Activated T-helper 1 cell treated with anti-CD3 and anti-CD28 coated beads, Interleukin-12 subunit alpha, Interleukin-12 subunit beta, Interleukin-2, Interleukin-4 antibody, amounts not matched to agents 30 ng/mL and 10 ng/mL and 1 ng/mL, durations not matched to agents 14 hours and 24 hours and 36 hours (primary cell): ENCODE measurements at regions of chr5 and their contacts with region 1.

Region 1: DNA sequence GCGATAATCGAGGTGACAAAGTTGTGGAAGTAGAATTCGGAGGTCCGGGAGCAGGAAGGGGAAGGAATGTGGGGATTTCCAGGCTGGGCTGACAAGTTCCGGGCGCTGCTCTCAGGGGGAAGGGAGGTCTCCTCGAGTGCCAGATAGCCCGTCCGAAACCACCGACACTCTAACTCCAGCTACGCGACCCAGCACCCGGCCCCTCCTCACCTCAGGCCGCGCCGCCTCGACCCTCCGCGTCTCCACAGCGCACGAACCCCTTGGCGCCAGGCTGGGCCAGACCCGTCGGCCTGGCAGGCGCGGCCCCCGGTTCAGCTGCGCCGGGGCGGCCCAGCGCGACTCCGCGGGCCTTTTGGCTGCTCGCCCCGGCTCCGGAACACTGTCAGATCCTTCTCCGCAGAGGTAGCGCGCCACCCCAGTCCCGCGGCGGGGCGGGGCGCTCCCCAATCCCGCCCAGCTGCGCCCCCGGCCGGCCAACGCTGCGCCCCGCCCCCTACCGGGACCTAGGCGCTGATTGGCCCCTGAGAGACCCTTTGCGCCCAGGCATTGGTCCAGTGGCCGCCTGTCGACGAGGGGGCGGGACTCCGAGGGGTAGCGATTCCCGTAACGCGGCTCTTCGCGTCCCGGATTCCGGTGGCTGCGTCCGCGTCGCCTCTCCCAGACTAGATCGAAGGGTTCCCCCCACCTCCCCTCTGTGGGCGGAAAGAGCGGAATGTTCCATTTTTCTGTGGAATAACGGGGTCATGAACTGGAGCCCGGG is at the start of gene IL6ST:
- DNase-seq: peak; percentile 95
- H3K4me3 Mint-ChIP-seq: peak within 1 kb of the TSS; percentile 95
- H3K27ac Mint-ChIP-seq: peak within 1 kb of the TSS; percentile 95
- H3K4me1 Mint-ChIP-seq: peaks cover 66% of the 10 kb centered on the region
- H3K27me3 Mint-ChIP-seq: no peaks in the 10 kb centered on the region
- total RNA-seq, gene IL6ST: 85.8 and 86.1 TPM in 2 replicates

Region 2: GRCh38 chr5:54619731-54620547 is 1374.8 kb before region 1 on chr5:
- intact Hi-C with region 1: no loop called
- DNase-seq: no peak
- H3K4me3 Mint-ChIP-seq: no peak overlapping the region
- H3K27ac Mint-ChIP-seq: no peak overlapping the region
- H3K4me1 Mint-ChIP-seq: peaks cover 24% of the 10 kb centered on the region
- H3K27me3 Mint-ChIP-seq: peaks cover 9% of the 10 kb centered on the region

Region 3: DNA sequence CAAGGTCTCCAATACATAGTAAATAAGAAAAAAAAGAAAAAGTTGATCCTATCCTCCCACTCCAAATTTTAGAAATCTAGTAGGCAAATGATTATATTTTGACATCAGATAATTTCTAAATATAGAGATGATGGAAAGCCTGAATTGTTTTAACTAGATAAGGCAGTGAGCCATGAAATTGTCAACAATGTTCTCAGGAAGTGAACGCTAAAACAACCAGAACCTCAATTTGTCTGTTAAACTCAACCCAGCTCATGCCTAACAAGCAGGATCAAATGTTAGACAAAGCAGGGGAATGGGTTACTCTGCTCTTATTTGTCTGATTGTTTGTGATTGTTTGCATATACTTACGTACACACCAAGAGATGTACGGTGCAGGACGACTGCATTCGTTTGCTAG is 1058.6 kb before region 1 on chr5:
- intact Hi-C with region 1: no loop called
- DNase-seq: no peak
- H3K4me3 Mint-ChIP-seq: no peak overlapping the region
- H3K27ac Mint-ChIP-seq: no peak overlapping the region
- H3K4me1 Mint-ChIP-seq: no peaks in the 10 kb centered on the region
- H3K27me3 Mint-ChIP-seq: peaks cover 45% of the 10 kb centered on the region

Region 4: GRCh38 chr5:55913466-55914413 is 81.0 kb before region 1 on chr5:
- intact Hi-C with region 1: no loop called
- DNase-seq: no peak
- H3K4me3 Mint-ChIP-seq: no peak overlapping the region
- H3K27ac Mint-ChIP-seq: no peak overlapping the region
- H3K4me1 Mint-ChIP-seq: peaks cover 23% of the 10 kb centered on the region
- H3K27me3 Mint-ChIP-seq: peaks cover 3% of the 10 kb centered on the region

Region 5: DNA sequence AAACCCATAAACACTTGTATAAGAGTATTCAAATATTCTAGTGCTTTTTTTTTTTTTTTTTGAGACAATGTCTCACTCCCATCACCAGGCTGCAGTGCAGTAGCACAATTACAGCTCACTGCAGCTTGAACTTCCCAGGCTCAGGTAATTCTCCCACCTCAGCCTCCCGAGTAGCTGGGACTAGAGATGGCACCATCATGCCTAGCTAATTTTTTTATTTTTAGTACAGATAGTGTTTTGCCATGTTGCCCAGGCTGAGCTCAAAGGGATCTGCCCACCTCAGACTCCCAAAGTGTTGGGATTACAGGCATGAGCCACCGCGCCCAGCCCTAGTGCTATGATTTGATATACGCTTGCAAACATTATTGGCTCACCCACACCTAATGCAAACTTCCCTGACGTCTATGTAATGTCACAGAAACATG is 11.8 kb before region 1 on chr5:
- intact Hi-C with region 1: loop called (anchors 1 kb)
- DNase-seq: no peak
- H3K4me3 Mint-ChIP-seq: peak overlapping the region; percentile 56
- H3K27ac Mint-ChIP-seq: peak overlapping the region; percentile 51
- H3K4me1 Mint-ChIP-seq: peaks cover 81% of the 10 kb centered on the region
- H3K27me3 Mint-ChIP-seq: no peaks in the 10 kb centered on the region

Region 6: GRCh38 chr5:56039985-56040384 is 45.2 kb after region 1 on chr5:
- intact Hi-C with region 1: no loop called
- DNase-seq: no peak
- H3K4me3 Mint-ChIP-seq: no peak overlapping the region
- H3K27ac Mint-ChIP-seq: no peak overlapping the region
- H3K4me1 Mint-ChIP-seq: peaks cover 14% of the 10 kb centered on the region
- H3K27me3 Mint-ChIP-seq: peaks cover 13% of the 10 kb centered on the region

Region 7: DNA sequence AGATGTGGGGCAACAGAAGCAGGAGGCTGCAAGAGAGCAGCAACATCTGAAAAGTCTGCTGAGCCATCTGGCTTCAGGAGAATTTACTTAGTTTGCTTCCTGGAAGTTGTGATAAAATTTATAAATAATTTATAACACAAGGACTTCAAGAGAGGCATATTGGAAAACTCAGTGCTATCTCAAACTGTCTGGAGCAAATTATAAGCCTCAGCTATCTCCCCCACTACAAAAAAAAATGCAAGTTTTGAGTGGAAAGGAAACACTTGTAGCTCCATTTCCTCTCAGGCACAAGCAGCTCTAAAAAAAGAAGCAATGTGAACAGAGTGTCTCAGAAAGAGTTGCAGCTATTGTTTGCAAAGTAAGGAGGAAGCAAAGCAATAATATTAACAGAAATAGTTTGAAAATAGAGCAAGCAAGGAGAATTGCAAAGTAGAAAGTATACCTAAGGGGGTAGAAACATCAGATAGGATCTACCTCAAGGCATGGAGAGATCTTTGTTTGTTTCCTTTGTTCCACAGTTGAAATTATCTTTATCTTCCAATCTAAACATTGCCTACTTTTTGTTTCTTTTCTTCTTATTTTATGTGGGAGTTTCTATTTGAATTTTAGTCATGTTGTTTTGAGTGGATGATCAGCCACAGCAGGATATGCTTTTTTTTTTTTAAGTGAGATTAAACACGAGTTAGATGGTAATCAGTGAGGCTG is 55.9 kb after region 1 on chr5:
- intact Hi-C with region 1: loop called (anchors 1 kb)
- DNase-seq: no peak
- H3K4me3 Mint-ChIP-seq: peak overlapping the region; percentile 40
- H3K27ac Mint-ChIP-seq: peak overlapping the region; percentile 54
- H3K4me1 Mint-ChIP-seq: peaks cover 32% of the 10 kb centered on the region
- H3K27me3 Mint-ChIP-seq: peaks cover 6% of the 10 kb centered on the region

Region 8: GRCh38 chr5:56126487-56127179 is 131.9 kb after region 1 on chr5:
- intact Hi-C with region 1: loop called (anchors 1 kb)
- DNase-seq: no peak
- H3K4me3 Mint-ChIP-seq: peak overlapping the region; percentile 76
- H3K27ac Mint-ChIP-seq: peak overlapping the region; percentile 94
- H3K4me1 Mint-ChIP-seq: peaks cover 40% of the 10 kb centered on the region
- H3K27me3 Mint-ChIP-seq: no peaks in the 10 kb centered on the region

Region 9: GRCh38 chr5:56200856-56201666 is 206.3 kb after region 1 on chr5:
- intact Hi-C with region 1: loop called (anchors 1 kb)
- DNase-seq: peak; percentile 48
- H3K4me3 Mint-ChIP-seq: no peak overlapping the region
- H3K27ac Mint-ChIP-seq: no peak overlapping the region
- H3K4me1 Mint-ChIP-seq: peaks cover 27% of the 10 kb centered on the region
- H3K27me3 Mint-ChIP-seq: no peaks in the 10 kb centered on the region